ENCODE measurements at regions of chr1 and their contacts with region 1.

Region 1: GRCh38 chr1:210311726-210312493 is 16.8 kb upstream of the HHAT start:
- DNase-seq: no peak
- H3K4me3 ChIP-seq: peak overlapping the region; percentile 51
- H3K27ac ChIP-seq: no peak overlapping the region
- H3K4me1 ChIP-seq: peaks cover 5% of the 10 kb centered on the region
- CTCF ChIP-seq: no peak

Region 2: DNA sequence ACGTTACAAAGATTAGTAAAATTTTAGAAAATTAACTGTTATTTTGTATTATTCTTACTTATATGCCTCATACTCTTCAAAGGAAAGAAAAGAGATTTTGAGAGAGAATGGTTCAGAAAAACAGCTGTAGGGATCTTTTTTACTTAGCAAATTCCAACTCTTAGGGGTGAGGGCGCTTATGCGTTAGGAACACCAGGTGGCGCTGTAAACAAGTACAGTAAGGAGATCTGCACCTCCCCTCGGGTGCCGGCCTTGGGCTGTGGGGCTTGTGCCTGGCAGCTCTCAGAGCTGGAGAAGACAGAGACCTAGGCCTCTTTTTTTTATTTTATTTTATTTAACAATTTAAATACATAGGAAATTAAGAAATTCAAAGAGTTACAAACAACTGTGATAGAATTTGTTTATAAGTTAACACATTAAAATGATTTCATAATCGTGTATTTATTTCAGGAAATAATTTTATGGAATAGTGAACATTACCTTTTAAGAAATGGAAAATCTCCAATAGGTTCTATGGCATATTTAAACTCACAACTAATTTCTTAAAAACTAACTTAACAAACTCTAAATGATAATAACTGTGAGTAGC is 451.5 kb before region 1 on chr1:
- CTCF ChIA-PET with region 1: no interaction called
- POLR2A ChIA-PET with region 1: interaction called, 3 read pairs
- intact Hi-C with region 1: loop called (anchors 1 kb)
- DNase-seq: peak; percentile 79
- H3K4me3 ChIP-seq: no peak overlapping the region
- H3K27ac ChIP-seq: no peak overlapping the region
- H3K4me1 ChIP-seq: no peaks in the 10 kb centered on the region
- CTCF ChIP-seq: peak; percentile 97

Region 3: GRCh38 chr1:210143465-210144062 is 168.3 kb before region 1 on chr1:
- CTCF ChIA-PET with region 1: no interaction called
- POLR2A ChIA-PET with region 1: interaction called, 3 read pairs
- intact Hi-C with region 1: loop called (anchors 1 kb)
- DNase-seq: peak; percentile 65
- H3K4me3 ChIP-seq: no peak overlapping the region
- H3K27ac ChIP-seq: no peak overlapping the region
- H3K4me1 ChIP-seq: no peaks in the 10 kb centered on the region
- CTCF ChIP-seq: peak; percentile 94

Measured in OCI-LY7 (cell line).